Heart left ventricle (tissue), 16 donors: ENCODE measurements at regions of chr15 and their contacts with region 1.

Region 1: DNA sequence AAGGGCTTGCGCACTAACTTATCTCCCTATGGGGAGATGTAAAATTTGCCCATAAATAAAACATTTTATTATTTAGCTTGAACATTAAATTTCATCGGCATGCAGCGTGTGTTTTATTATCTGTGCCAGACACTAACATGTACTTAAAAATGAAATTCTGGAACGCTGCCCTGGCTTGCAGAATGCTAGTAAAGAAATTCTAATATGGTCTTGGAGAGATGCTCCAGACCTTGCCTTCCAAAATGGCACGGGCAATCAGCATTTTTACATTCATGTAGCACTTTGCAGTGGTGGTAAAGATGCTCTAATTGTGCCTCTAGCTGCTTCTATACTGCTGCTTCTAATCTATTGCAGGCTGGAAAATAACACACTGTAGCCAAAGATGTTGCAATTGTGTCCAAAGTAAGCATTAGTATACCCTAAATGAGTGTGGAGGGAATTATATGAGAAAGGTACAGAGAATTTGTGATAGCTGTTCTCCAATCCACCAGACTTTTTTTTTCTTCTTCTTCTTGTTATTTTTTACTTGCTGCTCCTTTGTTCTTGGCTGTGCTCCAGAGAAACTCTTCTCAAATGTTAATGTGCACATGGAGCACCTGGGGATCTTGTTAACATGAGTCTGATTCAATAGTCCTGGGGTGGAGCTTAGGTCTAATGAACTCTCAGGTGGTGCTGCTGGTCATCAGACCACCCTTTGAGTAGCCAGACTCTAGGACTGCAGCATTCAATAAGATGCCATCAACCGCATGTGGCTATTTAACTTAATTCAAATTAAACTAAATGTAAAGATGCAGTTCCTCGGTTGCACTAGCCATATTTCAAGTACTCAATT is 47.3 kb downstream of the CRABP1 start:
- DNase-seq: no peak
- ATAC-seq: no peak
- H3K4me3 ChIP-seq: no peak overlapping the region
- H3K27ac ChIP-seq: no peak overlapping the region
- H3K4me1 ChIP-seq: no peaks in the 10 kb centered on the region
- H3K27me3 ChIP-seq: peaks cover 0 to 40% (median 22%) of the 10 kb centered on the region in 9 donors
- CTCF ChIP-seq: no peak
- POLR2A ChIP-seq: no peak

Region 2: DNA sequence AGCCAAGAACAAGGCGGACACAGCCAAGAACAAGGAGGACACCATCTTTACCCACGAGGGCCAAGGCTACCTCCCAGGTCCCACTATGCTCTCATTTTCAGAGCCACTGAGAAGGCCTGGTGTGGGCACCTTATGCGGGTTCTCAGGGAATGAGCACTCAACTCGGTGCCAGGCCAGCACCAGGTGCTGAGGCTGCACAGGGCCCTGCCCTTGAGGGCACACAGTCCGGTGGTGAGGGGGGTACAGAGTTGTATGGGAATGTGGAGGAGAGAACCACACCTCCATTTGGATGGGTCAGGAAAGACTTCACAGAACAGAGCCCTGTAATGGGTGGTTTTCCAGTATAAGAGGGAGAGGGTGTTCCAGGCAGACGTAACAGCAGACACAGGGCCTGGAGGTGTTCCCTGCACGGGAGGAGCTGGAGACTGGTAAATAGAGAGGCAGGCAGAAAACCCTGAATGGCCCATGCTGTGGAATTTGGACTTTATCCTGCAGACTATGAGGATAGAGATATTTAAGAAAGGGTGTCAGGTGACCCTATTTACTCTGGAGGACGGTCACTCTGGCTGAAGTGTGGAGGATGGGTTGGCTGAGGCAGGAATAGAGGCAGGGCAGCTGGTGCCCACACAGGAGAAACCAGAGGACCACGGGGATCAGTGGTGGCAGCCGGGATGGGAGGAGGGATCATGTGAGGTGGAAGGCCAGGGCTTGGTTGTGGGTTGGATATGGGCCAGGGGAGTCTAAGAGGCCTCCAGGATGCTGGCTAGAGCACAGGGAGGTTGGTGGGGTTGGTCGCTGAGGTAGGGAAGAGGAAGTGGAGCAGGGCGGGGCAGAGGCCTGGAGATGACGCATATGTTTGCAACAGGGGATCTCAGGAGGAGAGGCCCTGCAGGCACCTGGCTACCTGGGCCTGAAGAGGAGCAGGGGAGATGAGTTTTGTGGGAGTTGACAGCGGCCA is 12.7 kb before region 1 on chr15:
- intact Hi-C with region 1: loop called in 1 of 10 experiments (anchors 1 kb)
- DNase-seq: no peak
- ATAC-seq: peak in 1 of 4 donors; percentile 26
- H3K4me3 ChIP-seq: no peak overlapping the region
- H3K27ac ChIP-seq: no peak overlapping the region
- H3K4me1 ChIP-seq: peaks cover 0 to 2% (median 0%) of the 10 kb centered on the region in 12 donors
- H3K27me3 ChIP-seq: no peaks in the 10 kb centered on the region
- CTCF ChIP-seq: no peak
- POLR2A ChIP-seq: no peak

Region 3: DNA sequence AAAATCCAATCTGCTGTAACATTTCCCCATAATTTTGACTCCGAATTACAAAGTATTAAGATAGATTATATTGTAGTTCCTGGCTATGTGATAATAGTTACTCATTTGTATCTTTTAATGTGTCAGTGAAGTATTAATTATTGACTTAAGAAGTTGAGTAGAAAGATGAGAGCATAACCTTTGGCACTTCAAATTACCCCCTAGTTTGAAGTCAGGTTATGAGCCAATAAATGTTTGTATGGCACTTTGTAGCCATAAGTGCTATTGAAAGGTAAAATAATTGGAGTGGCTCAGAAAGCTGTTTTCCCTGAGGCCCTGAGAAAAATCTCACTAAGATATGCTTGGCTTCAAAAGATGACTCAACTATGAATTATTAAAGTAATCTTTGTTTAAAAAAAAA is 81.6 kb after region 1 on chr15:
- intact Hi-C with region 1: no loop called
- DNase-seq: no peak
- ATAC-seq: no peak
- H3K4me3 ChIP-seq: no peak overlapping the region
- H3K27ac ChIP-seq: no peak overlapping the region
- H3K4me1 ChIP-seq: peaks cover 0 to 24% (median 7%) of the 10 kb centered on the region in 12 donors
- H3K27me3 ChIP-seq: no peaks in the 10 kb centered on the region
- CTCF ChIP-seq: no peak
- POLR2A ChIP-seq: no peak

Region 4: GRCh38 chr15:79349525-79349924 is 962.1 kb after region 1 on chr15:
- intact Hi-C with region 1: no loop called
- DNase-seq: no peak
- ATAC-seq: peak in 1 of 4 donors; percentile 46
- H3K4me3 ChIP-seq: no peak overlapping the region
- H3K27ac ChIP-seq: no peak overlapping the region
- H3K4me1 ChIP-seq: peaks cover 0 to 6% (median 0%) of the 10 kb centered on the region in 12 donors
- H3K27me3 ChIP-seq: no peaks in the 10 kb centered on the region
- CTCF ChIP-seq: no peak
- POLR2A ChIP-seq: no peak